ENCODE measurements at regions of chr17 and their contacts with region 1.

Region 1: GRCh38 chr17:31533546-31534155 is 142.2 kb downstream of the RAB11FIP4 start:
- DNase-seq: peak; percentile 45 to 79
- ATAC-seq: peak; percentile 58 to 83
- H3K4me3 ChIP-seq: no peak overlapping the region
- H3K27ac ChIP-seq: peak overlapping the region in 1 of 2 experiments; percentile 29; a peak in 3 of 6 replicates
- H3K4me1 ChIP-seq: peaks cover 7% of the 10 kb centered on the region
- CTCF ChIP-seq: peak; percentile 39
- EP300 ChIP-seq: no peak
- POLR2A ChIP-seq: no peak
- RAD21 ChIP-seq: peak; percentile 56 to 63

Region 2: GRCh38 chr17:31549525-31550388 is 16.1 kb after region 1 on chr17:
- CTCF ChIA-PET with region 1: interaction called, 127 read pairs
- POLR2A ChIA-PET with region 1: interaction called, 4 read pairs
- DNase-seq: peak; percentile 87 to 95
- ATAC-seq: peak; percentile 83 to 90
- H3K4me3 ChIP-seq: peak overlapping the region; percentile 85
- H3K27ac ChIP-seq: peak overlapping the region; percentile 93 to 98
- H3K4me1 ChIP-seq: peaks cover 7% of the 10 kb centered on the region
- CTCF ChIP-seq: no peak
- EP300 ChIP-seq: no peak
- POLR2A ChIP-seq: peak; percentile 63
- RAD21 ChIP-seq: no peak; a peak in 1 of 5 replicates

Region 3: GRCh38 chr17:31581022-31581490 is 47.4 kb after region 1 on chr17:
- CTCF ChIA-PET with region 1: no interaction called
- POLR2A ChIA-PET with region 1: no interaction called
- DNase-seq: no peak
- ATAC-seq: peak; percentile 22 to 52; a peak in 4 of 6 replicates
- H3K4me3 ChIP-seq: no peak overlapping the region
- H3K27ac ChIP-seq: peak overlapping the region in 1 of 2 experiments; percentile 12; a peak in 1 of 6 replicates
- H3K4me1 ChIP-seq: peaks cover 4% of the 10 kb centered on the region; the same call in 1 of the 3 replicates
- CTCF ChIP-seq: no peak
- EP300 ChIP-seq: no peak
- POLR2A ChIP-seq: no peak
- RAD21 ChIP-seq: no peak

Measured in A549 (cell line).